ENCODE measurements at regions of chr7 and their contacts with region 1.

Region 1: GRCh38 chr7:118586248-118586647 is 361.7 kb downstream of the ANKRD7 start:
- DNase-seq: no peak
- H3K4me3 ChIP-seq: no peak overlapping the region
- H3K4me3 Mint-ChIP-seq: no peak overlapping the region
- H3K27ac ChIP-seq: no peak overlapping the region
- H3K27ac Mint-ChIP-seq: no peak overlapping the region
- H3K4me1 ChIP-seq: no peaks in the 10 kb centered on the region
- H3K4me1 Mint-ChIP-seq: no peaks in the 10 kb centered on the region
- H3K27me3 ChIP-seq: no peaks in the 10 kb centered on the region
- H3K27me3 Mint-ChIP-seq: peaks cover 0 to 3% (median 0%) of the 10 kb centered on the region in 3 donors
- CTCF ChIP-seq: no peak

Region 2: GRCh38 chr7:118264836-118265235 is 321.4 kb before region 1 on chr7:
- intact Hi-C with region 1: loop called in 1 of 2 experiments (anchors 5 kb)
- DNase-seq: no peak
- H3K4me3 ChIP-seq: no peak overlapping the region
- H3K4me3 Mint-ChIP-seq: peak overlapping the region in 1 of 2 donors; percentile 63
- H3K27ac ChIP-seq: no peak overlapping the region
- H3K27ac Mint-ChIP-seq: no peak overlapping the region
- H3K4me1 ChIP-seq: no peaks in the 10 kb centered on the region
- H3K4me1 Mint-ChIP-seq: no peaks in the 10 kb centered on the region
- H3K27me3 ChIP-seq: peaks cover 55 to 79% of the 10 kb centered on the region in 2 donors
- H3K27me3 Mint-ChIP-seq: peaks cover 48 to 63% (median 50%) of the 10 kb centered on the region in 3 donors
- CTCF ChIP-seq: no peak